B cell (primary cell): ENCODE measurements at regions of chr4 and their contacts with region 1.

Region 1: GRCh38 chr4:74189331-74190043 is 31.6 kb downstream of the MTHFD2L start:
- DNase-seq: peak; percentile 73
- ATAC-seq: peak; percentile 58
- H3K4me3 ChIP-seq: no peak overlapping the region
- H3K4me3 Mint-ChIP-seq: no peak overlapping the region
- H3K27ac ChIP-seq: no peak overlapping the region
- H3K27ac Mint-ChIP-seq: no peak overlapping the region
- H3K4me1 ChIP-seq: no peaks in the 10 kb centered on the region
- H3K4me1 Mint-ChIP-seq: no peaks in the 10 kb centered on the region
- H3K27me3 ChIP-seq: no peaks in the 10 kb centered on the region
- H3K27me3 Mint-ChIP-seq: no peaks in the 10 kb centered on the region
- CTCF ChIP-seq: peak; percentile 95

Region 2: DNA sequence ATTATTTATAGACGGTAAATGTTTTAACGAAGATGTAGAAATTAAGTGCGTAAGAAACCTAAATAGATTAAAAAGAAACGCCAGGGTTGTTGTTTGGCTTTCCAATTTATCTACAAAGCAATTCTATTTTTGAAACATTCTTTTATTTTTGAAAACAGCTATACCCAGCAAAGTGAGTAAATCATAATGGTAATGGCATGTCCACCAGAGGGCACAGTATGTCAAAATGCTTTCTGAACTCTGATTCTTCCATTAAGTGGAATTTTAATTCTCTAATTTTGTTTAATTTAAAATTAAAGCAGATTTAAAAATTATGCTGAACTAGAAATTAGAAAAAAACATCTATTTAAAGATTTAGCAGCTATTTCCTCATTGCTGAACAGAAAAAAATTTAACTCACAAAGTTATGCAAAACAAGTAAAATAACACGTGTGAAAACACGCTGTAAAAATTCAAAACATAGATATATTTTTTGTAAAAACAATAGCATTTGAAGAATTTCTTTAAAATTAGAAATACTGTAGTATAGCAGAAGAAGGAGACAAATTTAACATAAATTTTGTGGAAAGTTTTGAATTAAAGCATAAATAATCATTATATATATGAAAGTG is 595.8 kb before region 1 on chr4:
- CTCF ChIA-PET with region 1: no interaction called
- POLR2A ChIA-PET with region 1: no interaction called
- intact Hi-C with region 1: no loop called
- DNase-seq: peak; percentile 32
- ATAC-seq: no peak
- H3K4me3 ChIP-seq: no peak overlapping the region
- H3K4me3 Mint-ChIP-seq: no peak overlapping the region
- H3K27ac ChIP-seq: no peak overlapping the region
- H3K27ac Mint-ChIP-seq: no peak overlapping the region
- H3K4me1 ChIP-seq: peaks cover 12 to 16% of the 10 kb centered on the region in 2 donors
- H3K4me1 Mint-ChIP-seq: peaks cover 43% of the 10 kb centered on the region
- H3K27me3 ChIP-seq: no peaks in the 10 kb centered on the region
- H3K27me3 Mint-ChIP-seq: no peaks in the 10 kb centered on the region
- CTCF ChIP-seq: peak; percentile 70

Region 3: DNA sequence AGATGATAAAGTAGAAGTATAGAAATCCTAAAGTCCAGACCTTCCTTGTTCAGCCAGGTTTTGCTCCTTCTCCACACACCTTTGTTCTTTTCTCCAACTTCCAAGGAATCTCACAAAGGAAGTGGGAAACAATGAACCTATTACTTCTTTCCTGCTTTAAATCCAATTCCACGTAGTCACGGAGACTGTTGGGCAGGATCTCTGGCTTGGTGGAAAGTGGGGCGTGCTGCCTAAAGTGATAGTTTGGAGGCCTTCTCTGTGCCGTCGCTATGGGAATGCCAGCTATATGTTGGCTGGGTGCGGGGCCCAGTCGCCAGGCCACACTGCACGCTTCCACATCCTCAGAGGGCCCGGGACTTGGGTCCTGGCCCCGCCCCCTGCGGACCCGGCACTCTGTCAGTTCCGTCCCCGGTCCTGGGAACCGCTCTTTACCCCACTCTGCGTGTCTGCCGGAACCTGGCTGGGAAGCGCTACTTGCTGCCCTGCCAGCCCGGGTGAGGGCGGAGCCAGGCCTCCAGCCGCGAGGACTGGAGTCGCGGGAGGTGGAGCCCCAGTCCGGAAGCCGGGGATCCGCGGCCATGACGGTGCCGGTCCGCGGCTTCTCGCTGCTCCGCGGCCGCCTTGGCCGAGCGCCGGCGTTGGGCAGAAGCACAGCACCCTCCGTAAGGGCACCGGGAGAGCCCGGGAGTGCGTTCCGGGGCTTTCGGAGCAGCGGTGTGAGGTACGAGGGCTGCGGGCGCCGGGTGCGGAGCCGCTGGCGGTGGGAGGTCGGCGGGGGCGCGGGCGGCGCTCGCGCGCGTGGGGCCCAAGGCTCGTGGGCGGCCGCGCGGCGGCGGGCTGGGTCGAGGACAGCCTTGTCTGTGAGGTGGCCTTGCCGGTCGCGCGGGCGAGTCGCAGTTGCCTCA is 31.7 kb before region 1 on chr4 and contains the start of gene MTHFD2L:
- CTCF ChIA-PET with region 1: interaction called, 4 read pairs
- POLR2A ChIA-PET with region 1: no interaction called
- intact Hi-C with region 1: loop called (anchors 2 kb)
- DNase-seq: peak; percentile 87
- ATAC-seq: peak; percentile 97
- H3K4me3 ChIP-seq: peak within 1 kb of the TSS; percentile 66 to 84 (median 71)
- H3K4me3 Mint-ChIP-seq: peak within 1 kb of the TSS; percentile 97
- H3K27ac ChIP-seq: peak within 1 kb of the TSS; percentile 67 to 75
- H3K27ac Mint-ChIP-seq: peak within 1 kb of the TSS; percentile 92
- H3K4me1 ChIP-seq: peaks cover 11 to 13% of the 10 kb centered on the region in 2 donors
- H3K4me1 Mint-ChIP-seq: peaks cover 21% of the 10 kb centered on the region
- H3K27me3 ChIP-seq: peaks cover 0 to 9% (median 1%) of the 10 kb centered on the region in 4 experiments
- H3K27me3 Mint-ChIP-seq: peaks cover 11% of the 10 kb centered on the region
- CTCF ChIP-seq: no peak
- total RNA-seq, gene MTHFD2L: 12.6 and 13.3 TPM in 2 replicates

Region 4: GRCh38 chr4:74166135-74166534 is 23.4 kb before region 1 on chr4:
- CTCF ChIA-PET with region 1: interaction called, 5 read pairs
- POLR2A ChIA-PET with region 1: no interaction called
- intact Hi-C with region 1: loop called (anchors 2 kb)
- DNase-seq: no peak
- ATAC-seq: no peak
- H3K4me3 ChIP-seq: no peak overlapping the region
- H3K4me3 Mint-ChIP-seq: no peak overlapping the region
- H3K27ac ChIP-seq: no peak overlapping the region
- H3K27ac Mint-ChIP-seq: no peak overlapping the region
- H3K4me1 ChIP-seq: peaks cover 0 to 6% of the 10 kb centered on the region in 2 donors
- H3K4me1 Mint-ChIP-seq: peaks cover 10% of the 10 kb centered on the region
- H3K27me3 ChIP-seq: no peaks in the 10 kb centered on the region
- H3K27me3 Mint-ChIP-seq: no peaks in the 10 kb centered on the region
- CTCF ChIP-seq: no peak

Region 5: DNA sequence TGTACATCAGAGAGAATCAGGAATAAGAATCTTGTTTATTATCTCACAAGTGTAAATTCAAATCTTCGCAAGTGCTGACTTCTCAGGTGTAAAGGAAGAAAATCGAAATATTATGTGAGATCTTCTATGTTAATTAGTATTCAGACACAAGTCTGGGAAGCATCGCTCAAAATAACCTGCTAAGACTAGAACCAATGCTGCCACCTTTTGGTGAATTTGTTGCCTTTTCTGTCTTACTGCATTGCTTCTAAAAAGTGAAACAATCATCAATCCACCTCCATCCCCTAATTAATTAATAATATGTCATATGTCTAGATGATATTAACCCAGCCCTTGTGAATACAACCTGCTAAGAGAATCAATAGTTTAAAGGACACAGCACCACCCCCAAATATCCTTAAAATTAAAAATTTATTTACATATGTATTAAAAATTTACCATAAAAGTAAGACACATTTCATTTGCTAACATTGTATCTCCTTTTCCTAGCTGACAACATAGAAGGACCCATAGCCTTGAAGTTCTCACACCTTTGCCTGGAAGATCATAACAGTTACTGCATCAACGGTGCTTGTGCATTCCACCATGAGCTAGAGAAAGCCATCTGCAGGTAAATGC is 122.3 kb after region 1 on chr4:
- CTCF ChIA-PET with region 1: interaction called, 8 read pairs
- POLR2A ChIA-PET with region 1: no interaction called
- intact Hi-C with region 1: loop called (anchors 1 kb)
- DNase-seq: peak; percentile 60
- ATAC-seq: no peak
- H3K4me3 ChIP-seq: no peak overlapping the region
- H3K4me3 Mint-ChIP-seq: no peak overlapping the region
- H3K27ac ChIP-seq: no peak overlapping the region
- H3K27ac Mint-ChIP-seq: no peak overlapping the region
- H3K4me1 ChIP-seq: peaks cover 3 to 4% of the 10 kb centered on the region in 2 donors
- H3K4me1 Mint-ChIP-seq: peaks cover 7% of the 10 kb centered on the region
- H3K27me3 ChIP-seq: no peaks in the 10 kb centered on the region
- H3K27me3 Mint-ChIP-seq: no peaks in the 10 kb centered on the region
- CTCF ChIP-seq: peak; percentile 74

Region 6: GRCh38 chr4:74531963-74532794 is 342.7 kb after region 1 on chr4:
- CTCF ChIA-PET with region 1: interaction called, 14 read pairs
- POLR2A ChIA-PET with region 1: no interaction called
- intact Hi-C with region 1: loop called (anchors 1 kb)
- DNase-seq: peak; percentile 66
- ATAC-seq: peak; percentile 53
- H3K4me3 ChIP-seq: no peak overlapping the region
- H3K4me3 Mint-ChIP-seq: no peak overlapping the region
- H3K27ac ChIP-seq: no peak overlapping the region
- H3K27ac Mint-ChIP-seq: no peak overlapping the region
- H3K4me1 ChIP-seq: no peaks in the 10 kb centered on the region
- H3K4me1 Mint-ChIP-seq: no peaks in the 10 kb centered on the region
- H3K27me3 ChIP-seq: peaks cover 0 to 4% (median 0%) of the 10 kb centered on the region in 4 experiments
- H3K27me3 Mint-ChIP-seq: peaks cover 13% of the 10 kb centered on the region
- CTCF ChIP-seq: peak; percentile 62

Region 7: GRCh38 chr4:74675673-74676279 is 486.3 kb after region 1 on chr4:
- CTCF ChIA-PET with region 1: interaction called, 8 read pairs
- POLR2A ChIA-PET with region 1: no interaction called
- intact Hi-C with region 1: loop called (anchors 1 kb)
- DNase-seq: peak; percentile 44
- ATAC-seq: peak; percentile 56
- H3K4me3 ChIP-seq: no peak overlapping the region
- H3K4me3 Mint-ChIP-seq: no peak overlapping the region
- H3K27ac ChIP-seq: no peak overlapping the region
- H3K27ac Mint-ChIP-seq: no peak overlapping the region
- H3K4me1 ChIP-seq: no peaks in the 10 kb centered on the region
- H3K4me1 Mint-ChIP-seq: peaks cover 3% of the 10 kb centered on the region
- H3K27me3 ChIP-seq: no peaks in the 10 kb centered on the region
- H3K27me3 Mint-ChIP-seq: peaks cover 31% of the 10 kb centered on the region
- CTCF ChIP-seq: peak; percentile 79